Activated CD8-positive, alpha-beta T cell treated with anti-CD3 and anti-CD28 coated beads for 36 hours (primary cell): ENCODE measurements at regions of chr6 and their contacts with region 1.

Region 1: DNA sequence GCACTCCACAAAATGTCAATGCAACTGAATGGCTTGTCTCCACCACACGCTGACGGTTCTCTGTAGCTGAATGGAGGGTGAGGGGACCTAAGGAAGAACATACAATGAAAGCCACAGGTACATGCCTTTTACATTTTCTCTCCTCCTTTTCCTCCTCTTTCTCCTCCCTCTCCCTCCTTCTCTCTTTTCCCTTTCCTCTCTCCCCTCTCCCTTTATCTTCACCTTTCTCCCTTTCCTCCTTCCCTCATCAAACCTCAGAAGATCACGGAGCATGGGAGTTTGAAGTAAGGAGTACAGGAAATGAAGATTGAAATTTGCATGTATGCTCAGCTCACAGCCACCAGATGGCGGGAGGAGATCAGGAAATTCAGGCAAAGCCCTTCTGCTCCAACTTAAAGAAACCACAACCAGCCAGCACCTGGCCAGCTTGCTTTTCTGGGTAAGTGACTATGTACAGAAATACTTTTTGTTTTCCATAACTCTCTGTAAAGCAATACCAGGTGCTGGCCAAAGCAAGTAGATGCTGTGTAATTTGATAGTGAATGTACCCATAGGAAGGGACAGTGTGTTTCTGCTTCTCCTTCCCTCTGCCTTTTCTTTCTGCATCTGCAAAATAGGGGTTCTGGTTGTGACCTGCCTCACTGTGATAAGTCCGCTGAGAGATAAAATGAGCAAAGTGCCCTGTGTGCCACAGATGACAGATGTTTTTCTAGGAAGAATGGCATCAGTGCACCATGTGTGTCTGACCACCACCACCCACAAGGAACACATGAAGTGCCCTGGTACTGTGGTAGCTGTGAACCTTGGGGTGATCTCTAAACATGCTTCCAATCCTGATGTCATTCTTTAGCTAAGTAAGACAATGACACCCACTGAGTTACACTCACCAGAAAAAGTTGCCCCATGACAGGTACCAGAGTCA is 18.6 kb upstream of the FOXO3 start:
- DNase-seq: peak; percentile 79
- ATAC-seq: peak; percentile 91
- H3K4me3 Mint-ChIP-seq: peak overlapping the region; percentile 48
- H3K27ac Mint-ChIP-seq: no peak overlapping the region
- H3K4me1 Mint-ChIP-seq: peaks cover 13% of the 10 kb centered on the region
- H3K27me3 Mint-ChIP-seq: peaks cover 10% of the 10 kb centered on the region
- CTCF ChIP-seq: peak; percentile 94

Region 2: GRCh38 chr6:108518714-108519576 is 23.2 kb before region 1 on chr6:
- CTCF ChIA-PET with region 1: interaction called, 13 read pairs
- POLR2A ChIA-PET with region 1: no interaction called
- intact Hi-C with region 1: no loop called
- DNase-seq: peak; percentile 11
- ATAC-seq: no peak
- H3K4me3 Mint-ChIP-seq: no peak overlapping the region
- H3K27ac Mint-ChIP-seq: no peak overlapping the region
- H3K4me1 Mint-ChIP-seq: no peaks in the 10 kb centered on the region
- H3K27me3 Mint-ChIP-seq: no peaks in the 10 kb centered on the region
- CTCF ChIP-seq: peak; percentile 44

Region 3: DNA sequence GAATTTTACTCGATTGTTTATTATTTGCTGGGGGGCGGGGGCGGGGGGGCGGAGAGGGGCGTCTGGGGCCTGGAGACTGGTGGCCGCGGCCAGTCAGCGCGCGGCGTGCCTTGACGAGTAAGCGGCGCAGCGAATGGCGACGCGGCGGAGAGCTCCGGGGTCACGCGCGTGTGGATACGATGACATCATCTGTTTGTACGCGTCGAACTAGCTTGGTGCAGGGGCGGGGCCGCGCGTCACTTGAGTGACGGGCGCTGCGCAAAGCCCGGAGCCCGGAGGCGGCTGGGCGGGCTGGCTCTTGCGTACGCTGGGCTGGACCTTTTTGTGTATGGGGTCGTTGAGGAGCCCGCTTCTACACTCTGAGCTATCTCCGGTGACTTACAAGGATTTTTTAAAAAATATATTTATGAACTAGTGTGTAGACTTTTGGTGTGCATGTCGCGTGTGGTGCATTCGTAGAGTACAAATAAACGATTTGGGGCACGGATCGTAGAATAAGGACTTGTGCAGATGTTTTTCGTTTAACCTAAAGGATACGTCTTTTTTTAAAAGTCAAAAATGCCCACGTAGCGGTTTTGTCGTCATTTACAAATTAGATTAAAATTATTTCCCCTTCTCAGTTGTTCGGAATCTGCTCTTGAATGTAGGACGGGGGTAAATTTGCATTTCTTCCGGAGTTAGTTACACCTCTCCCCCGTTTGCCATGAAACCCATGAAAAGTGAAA is 16.4 kb after region 1 on chr6:
- CTCF ChIA-PET with region 1: interaction called, 8 read pairs
- POLR2A ChIA-PET with region 1: interaction called, 13 read pairs
- intact Hi-C with region 1: no loop called
- DNase-seq: peak; percentile 98
- ATAC-seq: peak; percentile 77
- H3K4me3 Mint-ChIP-seq: peak overlapping the region; percentile 94
- H3K27ac Mint-ChIP-seq: peak overlapping the region; percentile 97
- H3K4me1 Mint-ChIP-seq: peaks cover 22% of the 10 kb centered on the region
- H3K27me3 Mint-ChIP-seq: peaks cover 1% of the 10 kb centered on the region
- CTCF ChIP-seq: no peak

Region 4: GRCh38 chr6:108574457-108575141 is 32.5 kb after region 1 on chr6:
- CTCF ChIA-PET with region 1: no interaction called
- POLR2A ChIA-PET with region 1: no interaction called
- intact Hi-C with region 1: no loop called
- DNase-seq: no peak
- ATAC-seq: no peak
- H3K4me3 Mint-ChIP-seq: no peak overlapping the region
- H3K27ac Mint-ChIP-seq: no peak overlapping the region
- H3K4me1 Mint-ChIP-seq: peaks cover 38% of the 10 kb centered on the region
- H3K27me3 Mint-ChIP-seq: no peaks in the 10 kb centered on the region
- CTCF ChIP-seq: no peak

Region 5: GRCh38 chr6:108835218-108835850 is 293.2 kb after region 1 on chr6:
- CTCF ChIA-PET with region 1: interaction called, 18 read pairs
- POLR2A ChIA-PET with region 1: no interaction called
- intact Hi-C with region 1: loop called (anchors 1 kb)
- DNase-seq: peak; percentile 95
- ATAC-seq: peak; percentile 96
- H3K4me3 Mint-ChIP-seq: no peak overlapping the region
- H3K27ac Mint-ChIP-seq: no peak overlapping the region
- H3K4me1 Mint-ChIP-seq: peaks cover 19% of the 10 kb centered on the region
- H3K27me3 Mint-ChIP-seq: peaks cover 2% of the 10 kb centered on the region
- CTCF ChIP-seq: peak; percentile 91

Region 6: GRCh38 chr6:108896111-108896661 is 354.1 kb after region 1 on chr6:
- CTCF ChIA-PET with region 1: interaction called, 19 read pairs
- POLR2A ChIA-PET with region 1: no interaction called
- intact Hi-C with region 1: loop called (anchors 5 kb)
- DNase-seq: no peak
- ATAC-seq: peak; percentile 63
- H3K4me3 Mint-ChIP-seq: no peak overlapping the region
- H3K27ac Mint-ChIP-seq: peak overlapping the region; percentile 84
- H3K4me1 Mint-ChIP-seq: peaks cover 25% of the 10 kb centered on the region
- H3K27me3 Mint-ChIP-seq: no peaks in the 10 kb centered on the region
- CTCF ChIP-seq: no peak